Activated CD8-positive, alpha-beta T cell treated with anti-CD3 and anti-CD28 coated beads for 36 hours (primary cell): ENCODE measurements at regions of chr4 and their contacts with region 1.

Region 1: DNA sequence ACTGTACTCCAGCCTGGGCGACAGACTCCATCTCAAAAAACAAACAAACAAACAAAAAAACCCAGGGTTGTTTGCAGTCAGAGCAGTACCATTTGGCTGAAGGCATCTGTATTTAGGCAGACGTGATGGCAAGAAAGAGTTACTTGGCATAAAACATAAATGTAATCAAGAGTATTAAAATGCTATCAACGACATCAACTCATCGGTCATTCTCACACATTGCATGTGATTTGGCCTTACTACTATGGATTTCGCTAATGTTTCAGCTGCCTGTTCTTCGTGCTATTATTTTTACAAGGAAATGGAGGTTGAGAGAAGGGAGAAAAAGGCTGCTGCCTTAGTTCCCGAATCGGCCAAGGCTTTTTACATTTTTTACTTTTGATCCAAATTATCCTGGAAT is 15.5 kb upstream of the SMARCA5 start:
- DNase-seq: no peak
- ATAC-seq: no peak
- H3K4me3 Mint-ChIP-seq: no peak overlapping the region
- H3K27ac Mint-ChIP-seq: no peak overlapping the region
- H3K4me1 Mint-ChIP-seq: no peaks in the 10 kb centered on the region
- H3K27me3 Mint-ChIP-seq: no peaks in the 10 kb centered on the region
- CTCF ChIP-seq: no peak

Region 2: DNA sequence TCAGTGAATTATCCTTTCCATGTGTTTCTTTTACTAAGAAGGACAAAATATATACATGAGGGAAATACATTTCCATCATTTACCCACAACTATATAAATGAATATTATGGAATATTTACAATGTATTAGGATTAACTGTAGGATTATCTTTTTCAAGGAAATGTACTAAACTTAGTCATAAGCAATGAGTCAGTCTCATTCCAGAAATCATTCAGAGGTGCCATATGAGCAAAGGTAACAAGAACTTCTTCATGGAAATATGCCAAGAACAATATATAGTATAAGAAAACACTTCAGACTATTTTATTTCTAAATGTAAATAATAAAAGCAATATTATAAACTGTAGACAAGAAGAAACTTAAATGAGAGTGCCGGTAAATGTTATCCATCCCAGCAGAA is 246.2 kb before region 1 on chr4:
- CTCF ChIA-PET with region 1: no interaction called
- POLR2A ChIA-PET with region 1: no interaction called
- intact Hi-C with region 1: no loop called
- DNase-seq: no peak
- ATAC-seq: no peak
- H3K4me3 Mint-ChIP-seq: no peak overlapping the region
- H3K27ac Mint-ChIP-seq: no peak overlapping the region
- H3K4me1 Mint-ChIP-seq: no peaks in the 10 kb centered on the region
- H3K27me3 Mint-ChIP-seq: no peaks in the 10 kb centered on the region
- CTCF ChIP-seq: no peak

Region 3: GRCh38 chr4:143389579-143390195 is 108.3 kb before region 1 on chr4:
- CTCF ChIA-PET with region 1: no interaction called
- POLR2A ChIA-PET with region 1: no interaction called
- intact Hi-C with region 1: no loop called
- DNase-seq: no peak
- ATAC-seq: no peak
- H3K4me3 Mint-ChIP-seq: no peak overlapping the region
- H3K27ac Mint-ChIP-seq: no peak overlapping the region
- H3K4me1 Mint-ChIP-seq: no peaks in the 10 kb centered on the region
- H3K27me3 Mint-ChIP-seq: peaks cover 5% of the 10 kb centered on the region
- CTCF ChIP-seq: no peak

Region 4: GRCh38 chr4:143406523-143406922 is 91.5 kb before region 1 on chr4:
- CTCF ChIA-PET with region 1: no interaction called
- POLR2A ChIA-PET with region 1: no interaction called
- intact Hi-C with region 1: loop called (anchors 10 kb)
- DNase-seq: peak; percentile 40
- ATAC-seq: no peak
- H3K4me3 Mint-ChIP-seq: no peak overlapping the region
- H3K27ac Mint-ChIP-seq: no peak overlapping the region
- H3K4me1 Mint-ChIP-seq: peaks cover 18% of the 10 kb centered on the region
- H3K27me3 Mint-ChIP-seq: peaks cover 9% of the 10 kb centered on the region
- CTCF ChIP-seq: no peak